ENCODE measurements at regions of chr20 and their contacts with region 1.

Region 1: DNA sequence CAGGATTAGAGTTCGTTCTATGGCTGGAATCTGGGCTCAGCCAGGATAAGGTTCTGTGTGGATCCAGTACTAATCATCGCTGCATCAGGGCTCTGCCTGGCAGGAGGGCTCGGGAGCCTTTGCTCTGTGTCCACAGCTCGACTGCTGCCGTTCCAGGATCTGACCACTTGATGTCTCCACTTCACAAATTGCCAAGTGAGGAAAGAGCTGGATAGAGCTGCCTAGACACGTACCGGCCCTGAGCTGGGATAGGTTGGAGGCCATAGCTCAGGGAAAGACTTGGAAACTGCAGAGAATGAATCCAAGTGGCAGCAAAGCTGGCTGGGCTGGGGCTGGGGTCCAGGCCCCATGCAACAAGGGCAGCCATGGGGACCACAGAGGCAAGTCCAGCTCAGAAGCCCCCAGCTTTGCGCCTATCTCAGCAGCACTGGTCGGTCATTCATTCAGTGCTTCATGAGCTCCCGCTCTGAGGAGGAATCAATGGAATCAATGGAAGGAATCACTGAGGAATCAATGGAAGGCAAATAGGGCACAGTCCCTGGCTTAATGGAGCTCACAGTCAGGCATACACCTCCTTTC is 38.0 kb upstream of the TOP1 start:
- DNase-seq: peak; percentile 20 to 69 (median 42)
- H3K4me3 ChIP-seq: no peak overlapping the region
- H3K4me3 Mint-ChIP-seq: peak overlapping the region in 2 of 7 donors; percentile 9 to 21
- H3K27ac ChIP-seq: peak overlapping the region; percentile 4
- H3K27ac Mint-ChIP-seq: peak overlapping the region in 4 of 8 donors; percentile 25 to 88 (median 68)
- H3K4me1 ChIP-seq: peaks cover 32% of the 10 kb centered on the region
- H3K4me1 Mint-ChIP-seq: peaks cover 35 to 36% (median 35%) of the 10 kb centered on the region in 3 donors
- H3K27me3 ChIP-seq: no peaks in the 10 kb centered on the region
- H3K27me3 Mint-ChIP-seq: no peaks in the 10 kb centered on the region

Region 2: GRCh38 chr20:41005361-41005729 is 14.7 kb after region 1 on chr20:
- CTCF ChIA-PET with region 1: interaction called, 21 read pairs
- POLR2A ChIA-PET with region 1: interaction called, 3 read pairs
- DNase-seq: no peak
- H3K4me3 ChIP-seq: no peak overlapping the region
- H3K4me3 Mint-ChIP-seq: no peak overlapping the region
- H3K27ac ChIP-seq: no peak overlapping the region
- H3K27ac Mint-ChIP-seq: peak overlapping the region in 2 of 8 donors; percentile 27 to 52
- H3K4me1 ChIP-seq: peaks cover 26% of the 10 kb centered on the region
- H3K4me1 Mint-ChIP-seq: peaks cover 20 to 31% (median 23%) of the 10 kb centered on the region in 3 donors
- H3K27me3 ChIP-seq: no peaks in the 10 kb centered on the region
- H3K27me3 Mint-ChIP-seq: no peaks in the 10 kb centered on the region

Region 3: DNA sequence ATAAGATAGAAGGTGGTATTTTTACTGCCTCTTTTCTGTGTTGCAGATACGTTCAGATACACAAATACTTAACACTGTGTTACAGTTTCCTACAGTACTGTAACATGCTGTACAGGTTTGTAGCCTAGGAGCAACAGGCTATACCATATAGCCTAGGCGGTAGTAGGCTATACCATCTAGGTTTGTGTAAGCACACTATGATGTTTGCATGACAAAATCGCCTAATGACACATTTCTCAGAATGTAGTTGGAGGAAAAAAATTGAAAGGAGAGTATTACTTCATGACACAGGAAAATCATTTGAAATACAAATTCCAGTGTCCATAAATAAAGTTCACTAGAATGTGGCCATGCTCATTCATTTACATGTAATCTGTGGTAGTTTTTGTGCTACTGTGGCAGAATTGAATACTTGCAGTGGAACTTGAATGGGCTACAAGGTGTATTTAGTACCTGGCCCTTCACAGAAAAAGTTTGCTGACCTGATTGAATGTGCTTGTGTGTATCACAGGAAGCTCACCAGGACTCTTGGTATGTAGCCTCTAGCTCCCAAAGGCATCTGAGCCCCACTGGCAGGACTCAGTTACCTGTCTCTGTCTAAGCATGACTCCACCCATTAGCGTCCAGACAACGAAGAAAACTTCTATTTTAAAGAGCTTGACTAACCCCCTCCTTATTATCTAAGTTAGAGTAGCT is 56.8 kb after region 1 on chr20:
- CTCF ChIA-PET with region 1: interaction called, 11 read pairs
- POLR2A ChIA-PET with region 1: interaction called, 7 read pairs
- DNase-seq: peak in 1 of 5 donors; percentile 13
- H3K4me3 ChIP-seq: peak overlapping the region; percentile 29
- H3K4me3 Mint-ChIP-seq: peak overlapping the region; percentile 48 to 89 (median 80)
- H3K27ac ChIP-seq: peak overlapping the region; percentile 55
- H3K27ac Mint-ChIP-seq: peak overlapping the region; percentile 71 to 94 (median 90)
- H3K4me1 ChIP-seq: peaks cover 81% of the 10 kb centered on the region
- H3K4me1 Mint-ChIP-seq: peaks cover 87 to 95% (median 95%) of the 10 kb centered on the region in 3 donors
- H3K27me3 ChIP-seq: no peaks in the 10 kb centered on the region
- H3K27me3 Mint-ChIP-seq: no peaks in the 10 kb centered on the region

Region 4: GRCh38 chr20:41078329-41078728 is 87.7 kb after region 1 on chr20:
- CTCF ChIA-PET with region 1: interaction called, 13 read pairs
- POLR2A ChIA-PET with region 1: no interaction called
- DNase-seq: peak in 2 of 5 donors; percentile 15 to 17
- H3K4me3 ChIP-seq: no peak overlapping the region
- H3K4me3 Mint-ChIP-seq: peak overlapping the region in 3 of 7 donors; percentile 19 to 46 (median 33)
- H3K27ac ChIP-seq: no peak overlapping the region
- H3K27ac Mint-ChIP-seq: peak overlapping the region in 7 of 8 donors; percentile 45 to 83 (median 58)
- H3K4me1 ChIP-seq: peaks cover 44% of the 10 kb centered on the region
- H3K4me1 Mint-ChIP-seq: peaks cover 45 to 65% (median 59%) of the 10 kb centered on the region in 3 donors
- H3K27me3 ChIP-seq: no peaks in the 10 kb centered on the region
- H3K27me3 Mint-ChIP-seq: no peaks in the 10 kb centered on the region

Region 5: DNA sequence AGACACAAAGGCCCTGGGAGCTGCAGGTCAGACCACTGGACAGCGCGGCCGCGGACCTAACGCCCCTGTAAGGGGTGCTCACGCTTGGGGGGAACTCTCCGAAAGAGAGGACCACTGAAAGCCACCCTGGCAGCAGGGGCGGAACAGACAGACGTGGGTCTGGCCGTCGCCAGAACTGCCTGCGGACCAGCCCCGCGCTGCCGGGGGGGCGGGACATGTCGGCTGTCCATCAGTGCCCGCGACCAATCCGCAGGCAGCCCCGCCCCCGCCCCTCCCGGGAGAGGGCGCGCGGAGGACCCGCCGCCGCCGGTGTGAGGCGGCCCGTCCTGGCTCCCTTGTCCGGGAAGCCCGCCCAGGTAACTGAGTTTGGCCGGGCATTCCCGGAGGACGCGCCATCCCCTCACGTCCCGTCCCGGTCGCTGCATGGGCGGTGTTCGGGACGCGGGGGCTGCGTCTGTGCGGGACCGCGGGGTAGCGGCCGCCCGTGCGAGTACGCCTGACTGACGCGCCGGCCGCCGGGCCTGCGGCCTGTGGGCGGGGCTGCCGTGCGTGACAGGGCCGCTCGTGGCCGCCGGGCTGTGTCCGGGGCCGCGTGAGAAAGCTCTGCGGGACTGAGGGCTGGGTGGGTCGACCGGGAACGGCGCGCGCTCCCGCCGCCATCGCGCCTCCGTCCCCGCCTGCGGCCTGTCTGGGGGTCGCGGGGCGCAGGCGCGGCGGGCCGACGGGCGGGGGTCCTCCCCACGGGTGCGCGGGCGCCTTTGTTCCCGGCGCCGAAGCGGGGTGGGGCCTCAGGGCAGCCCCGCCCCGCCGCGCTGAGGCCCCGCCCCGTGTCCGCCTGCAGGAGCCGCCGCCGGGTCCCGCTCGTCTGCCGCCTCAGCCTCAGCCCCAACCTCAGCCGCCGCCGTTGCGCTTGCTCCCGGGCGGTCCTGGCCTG is 146.3 kb after region 1 on chr20 and contains the start of gene PLCG1:
- CTCF ChIA-PET with region 1: interaction called, 17 read pairs
- POLR2A ChIA-PET with region 1: no interaction called
- DNase-seq: peak; percentile 80 to 86 (median 83)
- H3K4me3 ChIP-seq: peak within 1 kb of the TSS; percentile 85
- H3K4me3 Mint-ChIP-seq: peak within 1 kb of the TSS; percentile 89 to 98 (median 94)
- H3K27ac ChIP-seq: peak within 1 kb of the TSS; percentile 80
- H3K27ac Mint-ChIP-seq: peak within 1 kb of the TSS; percentile 92 to 99 (median 96)
- H3K4me1 ChIP-seq: peaks cover 63% of the 10 kb centered on the region
- H3K4me1 Mint-ChIP-seq: peaks cover 57 to 66% (median 63%) of the 10 kb centered on the region in 3 donors
- H3K27me3 ChIP-seq: no peaks in the 10 kb centered on the region
- H3K27me3 Mint-ChIP-seq: peaks cover 0 to 4% of the 10 kb centered on the region in 2 donors
- total RNA-seq, gene PLCG1: 104 to 108 TPM

Measured in CD8-positive, alpha-beta memory T cell (primary cell).